ENCODE measurements at regions of chr6 and their contacts with region 1.

Region 1: GRCh38 chr6:31541658-31542521 is at the start of gene DDX39B:
- DNase-seq: peak; percentile 87 to 99 (median 92)
- ATAC-seq: peak; percentile 71
- H3K4me3 ChIP-seq: peak within 1 kb of the TSS; percentile 91
- H3K4me3 Mint-ChIP-seq: peak within 1 kb of the TSS; percentile 96
- H3K27ac ChIP-seq: peak within 1 kb of the TSS; percentile 94 to 95
- H3K27ac Mint-ChIP-seq: peak within 1 kb of the TSS; percentile 99
- H3K4me1 ChIP-seq: peaks cover 53% of the 10 kb centered on the region
- H3K4me1 Mint-ChIP-seq: peaks cover 56% of the 10 kb centered on the region
- H3K27me3 ChIP-seq: no peaks in the 10 kb centered on the region
- H3K27me3 Mint-ChIP-seq: no peaks in the 10 kb centered on the region
- CTCF ChIP-seq: no peak
- total RNA-seq, gene DDX39B: 483 to 498 TPM

Region 2: GRCh38 chr6:31493875-31494694 is 47.8 kb before region 1 on chr6:
- CTCF ChIA-PET with region 1: interaction called, 30 read pairs
- POLR2A ChIA-PET with region 1: interaction called, 88 read pairs
- intact Hi-C with region 1: loop called (anchors 1 kb)
- DNase-seq: peak; percentile 51 to 91 (median 74)
- ATAC-seq: peak; percentile 39
- H3K4me3 ChIP-seq: peak overlapping the region; percentile 88
- H3K4me3 Mint-ChIP-seq: peak overlapping the region; percentile 58
- H3K27ac ChIP-seq: peak overlapping the region; percentile 65 to 68
- H3K27ac Mint-ChIP-seq: peak overlapping the region; percentile 83
- H3K4me1 ChIP-seq: peaks cover 69% of the 10 kb centered on the region
- H3K4me1 Mint-ChIP-seq: peaks cover 57% of the 10 kb centered on the region
- H3K27me3 ChIP-seq: no peaks in the 10 kb centered on the region
- H3K27me3 Mint-ChIP-seq: no peaks in the 10 kb centered on the region
- CTCF ChIP-seq: peak; percentile 80

Region 3: GRCh38 chr6:31575335-31575901 is 33.5 kb after region 1 on chr6 and contains the start of gene TNF:
- CTCF ChIA-PET with region 1: interaction called, 169 read pairs
- POLR2A ChIA-PET with region 1: interaction called, 220 read pairs
- intact Hi-C with region 1: loop called (anchors 1 kb)
- DNase-seq: peak in 13 of 14 experiments; percentile 47 to 93 (median 64)
- ATAC-seq: peak; percentile 14
- H3K4me3 ChIP-seq: peak within 1 kb of the TSS; percentile 75
- H3K4me3 Mint-ChIP-seq: peak within 1 kb of the TSS; percentile 95
- H3K27ac ChIP-seq: peak within 1 kb of the TSS; percentile 84 to 87
- H3K27ac Mint-ChIP-seq: peak within 1 kb of the TSS; percentile 95
- H3K4me1 ChIP-seq: peaks cover 97% of the 10 kb centered on the region
- H3K4me1 Mint-ChIP-seq: peaks cover 95% of the 10 kb centered on the region
- H3K27me3 ChIP-seq: no peaks in the 10 kb centered on the region
- H3K27me3 Mint-ChIP-seq: no peaks in the 10 kb centered on the region
- CTCF ChIP-seq: no peak
- total RNA-seq, gene TNF: 33.1 to 34.2 TPM

Region 4: DNA sequence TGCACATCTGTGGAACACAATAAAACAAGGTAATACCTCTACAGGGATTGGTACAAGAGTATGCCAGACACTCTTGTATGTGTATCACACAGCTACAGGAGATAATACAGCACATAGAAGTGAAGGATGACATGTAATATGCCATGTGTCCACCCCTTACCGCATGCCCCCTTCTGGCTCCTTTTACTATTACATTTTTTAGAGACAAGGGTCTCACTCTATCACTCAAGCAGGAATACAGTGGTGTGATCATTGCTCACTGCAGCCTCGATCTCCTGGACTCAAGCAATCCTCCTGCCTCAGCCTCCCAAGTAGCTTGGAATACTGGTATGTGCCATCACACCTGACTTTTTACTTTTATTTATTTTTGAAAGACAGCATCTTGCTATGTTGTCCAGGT is 55.1 kb after region 1 on chr6:
- CTCF ChIA-PET with region 1: interaction called, 284 read pairs
- POLR2A ChIA-PET with region 1: interaction called, 119 read pairs
- intact Hi-C with region 1: loop called (anchors 1 kb)
- DNase-seq: peak in 9 of 14 experiments; percentile 26 to 85 (median 45)
- ATAC-seq: peak; percentile 89
- H3K4me3 ChIP-seq: no peak overlapping the region
- H3K4me3 Mint-ChIP-seq: peak overlapping the region; percentile 7
- H3K27ac ChIP-seq: no peak overlapping the region
- H3K27ac Mint-ChIP-seq: peak overlapping the region; percentile 70
- H3K4me1 ChIP-seq: peaks cover 60% of the 10 kb centered on the region
- H3K4me1 Mint-ChIP-seq: peaks cover 40% of the 10 kb centered on the region
- H3K27me3 ChIP-seq: no peaks in the 10 kb centered on the region
- H3K27me3 Mint-ChIP-seq: no peaks in the 10 kb centered on the region
- CTCF ChIP-seq: peak; percentile 76

Region 5: GRCh38 chr6:31665501-31666336 is 123.8 kb after region 1 on chr6 and contains the start of gene CSNK2B:
- CTCF ChIA-PET with region 1: no interaction called
- POLR2A ChIA-PET with region 1: interaction called, 15 read pairs
- intact Hi-C with region 1: no loop called
- DNase-seq: peak; percentile 94 to 99 (median 97)
- ATAC-seq: peak; percentile 85
- H3K4me3 ChIP-seq: peak within 1 kb of the TSS; percentile 79
- H3K4me3 Mint-ChIP-seq: peak within 1 kb of the TSS; percentile 95
- H3K27ac ChIP-seq: peak within 1 kb of the TSS; percentile 93 to 96
- H3K27ac Mint-ChIP-seq: peak within 1 kb of the TSS; percentile 97
- H3K4me1 ChIP-seq: peaks cover 61% of the 10 kb centered on the region
- H3K4me1 Mint-ChIP-seq: peaks cover 51% of the 10 kb centered on the region
- H3K27me3 ChIP-seq: no peaks in the 10 kb centered on the region
- H3K27me3 Mint-ChIP-seq: no peaks in the 10 kb centered on the region
- CTCF ChIP-seq: no peak
- total RNA-seq, gene CSNK2B: 88.0 to 92.6 TPM

Region 6: GRCh38 chr6:31862344-31863227 is 320.7 kb after region 1 on chr6 and contains the start of gene NEU1:
- CTCF ChIA-PET with region 1: no interaction called
- POLR2A ChIA-PET with region 1: interaction called, 11 read pairs
- intact Hi-C with region 1: loop called in 1 of 2 experiments (anchors 1 kb)
- DNase-seq: peak; percentile 95 to 100 (median 98)
- ATAC-seq: peak; percentile 93
- H3K4me3 ChIP-seq: peak within 1 kb of the TSS; percentile 99
- H3K4me3 Mint-ChIP-seq: peak within 1 kb of the TSS; percentile 88
- H3K27ac ChIP-seq: peak within 1 kb of the TSS; percentile 80 to 96
- H3K27ac Mint-ChIP-seq: peak within 1 kb of the TSS; percentile 91
- H3K4me1 ChIP-seq: peaks cover 37% of the 10 kb centered on the region
- H3K4me1 Mint-ChIP-seq: peaks cover 28% of the 10 kb centered on the region
- H3K27me3 ChIP-seq: no peaks in the 10 kb centered on the region
- H3K27me3 Mint-ChIP-seq: no peaks in the 10 kb centered on the region
- CTCF ChIP-seq: no peak
- total RNA-seq, gene NEU1: 19.7 to 21.1 TPM